ENCODE measurements at regions of chr10 and their contacts with region 1.

Region 1: DNA sequence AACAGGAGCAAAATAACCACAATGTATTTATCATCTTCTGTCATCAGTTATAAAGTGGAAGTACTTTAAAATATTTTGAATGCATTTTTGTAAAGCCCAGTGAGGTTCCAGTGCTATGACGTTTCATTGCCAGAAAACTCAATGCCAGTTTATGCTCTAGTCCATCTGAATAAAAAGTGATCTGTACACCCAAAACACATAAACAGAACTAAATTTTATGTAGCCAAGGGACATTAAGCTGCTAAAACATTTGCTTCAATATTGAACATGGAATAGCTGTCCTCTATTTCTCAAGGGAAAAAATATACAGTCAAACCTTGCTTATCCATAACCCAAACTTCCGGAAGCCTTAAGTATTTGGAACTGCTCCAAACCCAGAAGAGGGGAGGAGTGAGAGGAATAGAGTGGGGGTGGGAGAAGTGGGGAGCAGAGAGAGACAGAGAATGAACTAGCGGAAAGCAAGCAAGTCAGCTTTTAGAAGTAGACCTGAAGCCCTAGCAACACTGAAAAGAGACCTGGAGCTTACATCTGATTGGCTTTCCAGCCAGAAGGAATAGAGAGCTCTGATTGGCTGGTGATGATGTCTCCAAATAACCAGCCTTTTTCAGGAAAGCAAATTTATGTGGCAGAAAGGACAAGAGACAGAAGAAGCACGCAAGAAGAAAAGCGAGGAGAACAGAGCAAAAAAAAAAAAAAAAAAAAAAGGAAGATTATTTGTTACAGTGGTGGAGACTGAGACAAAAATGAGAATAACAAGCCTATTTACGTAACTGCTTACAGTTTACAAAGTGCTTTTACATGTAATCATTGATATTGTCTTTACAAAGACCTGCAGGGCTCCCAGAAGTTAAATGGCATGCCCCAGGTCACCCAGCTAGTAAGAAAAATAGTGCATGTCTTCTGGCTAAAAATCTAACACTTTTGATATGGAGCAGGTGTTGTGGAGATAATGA is 196.0 kb downstream of the RNLS start:
- DNase-seq: peak; percentile 42
- H3K4me3 ChIP-seq: no peak overlapping the region
- H3K27ac ChIP-seq: no peak overlapping the region
- H3K4me1 ChIP-seq: peaks cover 26% of the 10 kb centered on the region
- H3K27me3 ChIP-seq: no peaks in the 10 kb centered on the region
- CTCF ChIP-seq: no peak

Region 2: GRCh38 chr10:87976101-87976743 is 410.9 kb before region 1 on chr10:
- CTCF ChIA-PET with region 1: no interaction called
- dilution Hi-C with region 1: no loop called
- in situ Hi-C with region 1: no loop called
- intact Hi-C with region 1: loop called (anchors 10 kb)
- DNase-seq: peak; percentile 52
- H3K4me3 ChIP-seq: no peak overlapping the region
- H3K27ac ChIP-seq: no peak overlapping the region
- H3K4me1 ChIP-seq: peaks cover 13% of the 10 kb centered on the region
- H3K27me3 ChIP-seq: no peaks in the 10 kb centered on the region
- CTCF ChIP-seq: no peak

Region 3: DNA sequence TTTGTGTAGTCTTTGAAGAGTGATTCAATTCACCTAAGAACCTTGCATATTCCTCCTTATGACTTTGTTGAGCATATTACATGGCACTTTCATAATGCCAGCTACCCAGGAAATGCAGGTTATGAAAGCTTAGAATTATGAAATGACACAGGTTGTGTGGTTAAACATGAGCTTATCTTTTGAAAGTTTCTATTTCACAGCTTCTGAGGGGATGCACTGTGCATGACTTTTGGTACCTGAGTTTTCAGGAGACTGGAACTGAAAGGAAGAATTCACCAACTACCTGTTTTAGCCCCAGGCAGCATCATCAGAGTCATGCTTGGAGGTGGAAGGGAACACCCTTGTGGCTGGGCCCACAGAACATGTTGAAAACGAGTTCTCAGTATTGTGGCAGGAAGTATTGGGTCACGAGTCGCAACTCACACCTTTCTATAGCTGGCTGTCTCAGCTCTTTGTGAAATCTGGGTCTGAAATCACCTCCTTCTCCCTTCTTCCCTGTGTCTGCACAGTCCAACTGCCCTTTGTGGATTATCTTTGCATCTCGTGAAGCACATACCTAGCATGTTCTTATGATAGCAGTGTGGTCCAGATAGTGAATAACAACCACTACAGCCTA is 295.5 kb before region 1 on chr10:
- CTCF ChIA-PET with region 1: interaction called, 4 read pairs
- dilution Hi-C with region 1: no loop called
- in situ Hi-C with region 1: no loop called
- intact Hi-C with region 1: loop called (anchors 2 kb)
- DNase-seq: peak; percentile 95
- H3K4me3 ChIP-seq: no peak overlapping the region
- H3K27ac ChIP-seq: peak overlapping the region; percentile 12
- H3K4me1 ChIP-seq: peaks cover 58% of the 10 kb centered on the region
- H3K27me3 ChIP-seq: no peaks in the 10 kb centered on the region
- CTCF ChIP-seq: peak in 1 of 2 donors; percentile 38

Region 4: GRCh38 chr10:88114368-88114767 is 272.7 kb before region 1 on chr10:
- CTCF ChIA-PET with region 1: interaction called, 4 read pairs
- dilution Hi-C with region 1: no loop called
- in situ Hi-C with region 1: no loop called
- intact Hi-C with region 1: loop called (anchors 5 kb)
- DNase-seq: no peak
- H3K4me3 ChIP-seq: no peak overlapping the region
- H3K27ac ChIP-seq: no peak overlapping the region
- H3K4me1 ChIP-seq: peaks cover 28% of the 10 kb centered on the region
- H3K27me3 ChIP-seq: no peaks in the 10 kb centered on the region
- CTCF ChIP-seq: peak; percentile 38 to 52

Region 5: DNA sequence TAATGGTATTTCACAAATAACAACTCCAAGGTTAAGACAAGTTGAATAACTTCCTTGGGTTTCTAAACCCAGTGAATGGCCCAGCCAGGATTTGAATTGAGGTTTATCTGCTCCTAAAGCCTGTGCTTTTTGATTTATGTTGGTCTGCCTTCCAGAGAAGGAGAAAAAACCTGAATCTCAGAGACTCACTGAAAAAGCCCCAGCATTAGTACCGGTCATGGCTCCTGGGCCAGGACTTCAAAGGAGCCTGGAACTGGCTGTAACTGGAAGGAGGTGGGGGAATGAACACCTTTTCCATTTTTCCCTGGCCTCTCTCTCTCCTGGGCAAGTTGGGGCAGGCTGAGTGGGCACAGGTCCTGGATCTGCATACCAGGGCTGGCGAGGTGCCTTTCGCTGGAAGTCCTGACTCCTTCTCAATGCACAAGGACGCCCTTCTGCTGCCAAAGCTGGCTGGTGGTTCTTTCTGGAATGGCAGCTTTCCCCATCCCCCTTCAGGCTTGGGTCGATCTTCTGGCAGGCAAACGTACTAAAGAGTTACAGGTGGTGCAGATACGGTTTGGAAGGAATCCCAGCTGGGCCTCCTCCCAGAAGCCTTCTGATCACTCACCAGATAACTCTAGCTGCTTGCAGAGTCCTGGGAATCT is 255.5 kb before region 1 on chr10:
- CTCF ChIA-PET with region 1: no interaction called
- dilution Hi-C with region 1: no loop called
- in situ Hi-C with region 1: no loop called
- intact Hi-C with region 1: loop called (anchors 1 kb)
- DNase-seq: peak; percentile 93
- H3K4me3 ChIP-seq: no peak overlapping the region
- H3K27ac ChIP-seq: peak overlapping the region; percentile 43
- H3K4me1 ChIP-seq: peaks cover 18% of the 10 kb centered on the region
- H3K27me3 ChIP-seq: no peaks in the 10 kb centered on the region
- CTCF ChIP-seq: peak; percentile 46 to 72

Region 6: DNA sequence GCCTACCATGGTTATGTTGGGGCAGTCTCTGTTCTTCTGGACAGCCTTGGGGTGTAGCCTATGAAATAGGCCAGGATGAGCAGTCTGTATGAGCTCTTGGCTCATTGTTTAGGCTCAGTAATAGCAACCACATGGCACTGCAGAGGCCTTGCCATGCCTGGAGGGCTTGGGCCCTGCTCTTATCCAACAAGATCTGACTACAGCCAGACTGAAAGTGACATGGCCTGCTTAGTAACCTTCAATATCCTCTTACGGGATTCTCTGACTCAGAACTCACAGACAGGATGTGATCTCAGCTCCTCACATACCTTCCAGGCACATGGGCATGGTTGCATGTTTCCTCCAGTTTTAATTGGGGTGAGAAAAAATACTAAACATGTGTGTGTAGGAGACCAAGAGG is 234.4 kb before region 1 on chr10:
- CTCF ChIA-PET with region 1: no interaction called
- dilution Hi-C with region 1: no loop called
- in situ Hi-C with region 1: no loop called
- intact Hi-C with region 1: loop called (anchors 2 kb)
- DNase-seq: peak; percentile 96
- H3K4me3 ChIP-seq: no peak overlapping the region
- H3K27ac ChIP-seq: peak overlapping the region; percentile 75
- H3K4me1 ChIP-seq: peaks cover 57% of the 10 kb centered on the region
- H3K27me3 ChIP-seq: no peaks in the 10 kb centered on the region
- CTCF ChIP-seq: no peak

Region 7: DNA sequence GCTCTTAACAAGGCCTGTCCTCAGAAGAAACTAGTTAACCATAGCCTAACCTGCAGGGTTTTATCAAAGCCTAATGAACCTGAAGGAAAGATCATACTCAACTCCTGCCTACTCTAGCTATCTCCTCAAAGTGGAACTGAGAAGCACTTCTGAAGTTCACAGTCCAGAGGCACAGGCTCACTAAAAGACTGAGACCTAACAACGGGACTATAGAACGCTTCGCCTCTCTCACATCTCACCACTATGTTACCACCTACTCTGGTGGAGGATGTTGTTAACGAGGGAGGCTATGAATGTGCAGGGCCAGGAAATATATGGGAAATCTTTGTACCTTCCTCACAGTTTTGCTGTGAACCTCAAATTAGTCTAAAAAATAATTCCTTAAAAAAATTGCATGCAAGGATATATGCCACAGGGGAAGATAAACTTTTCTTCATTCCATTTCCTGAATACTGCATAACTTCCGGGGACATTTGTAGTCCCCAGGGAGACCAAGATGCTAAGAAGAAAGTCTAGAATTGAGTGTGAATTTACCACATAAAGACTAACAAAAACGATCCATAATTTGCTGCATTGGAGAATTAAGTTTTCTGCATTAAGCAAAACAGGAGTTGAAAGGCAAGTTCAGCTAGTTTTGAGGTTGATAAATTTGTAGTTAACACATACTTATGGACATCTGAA is 221.1 kb after region 1 on chr10:
- CTCF ChIA-PET with region 1: no interaction called
- dilution Hi-C with region 1: no loop called
- in situ Hi-C with region 1: no loop called
- intact Hi-C with region 1: no loop called
- DNase-seq: no peak
- H3K4me3 ChIP-seq: no peak overlapping the region
- H3K27ac ChIP-seq: no peak overlapping the region
- H3K4me1 ChIP-seq: no peaks in the 10 kb centered on the region
- H3K27me3 ChIP-seq: no peaks in the 10 kb centered on the region
- CTCF ChIP-seq: no peak

Measured in mammary epithelial cell (primary cell).